Activated CD4-positive, alpha-beta memory T cell treated with anti-CD3 and anti-CD28 coated beads, Interleukin-2, amount 10 ng/mL, durations not matched to agents 7 days and 5 days (primary cell): ENCODE measurements at regions of chr5 and their contacts with region 1.

Region 1: DNA sequence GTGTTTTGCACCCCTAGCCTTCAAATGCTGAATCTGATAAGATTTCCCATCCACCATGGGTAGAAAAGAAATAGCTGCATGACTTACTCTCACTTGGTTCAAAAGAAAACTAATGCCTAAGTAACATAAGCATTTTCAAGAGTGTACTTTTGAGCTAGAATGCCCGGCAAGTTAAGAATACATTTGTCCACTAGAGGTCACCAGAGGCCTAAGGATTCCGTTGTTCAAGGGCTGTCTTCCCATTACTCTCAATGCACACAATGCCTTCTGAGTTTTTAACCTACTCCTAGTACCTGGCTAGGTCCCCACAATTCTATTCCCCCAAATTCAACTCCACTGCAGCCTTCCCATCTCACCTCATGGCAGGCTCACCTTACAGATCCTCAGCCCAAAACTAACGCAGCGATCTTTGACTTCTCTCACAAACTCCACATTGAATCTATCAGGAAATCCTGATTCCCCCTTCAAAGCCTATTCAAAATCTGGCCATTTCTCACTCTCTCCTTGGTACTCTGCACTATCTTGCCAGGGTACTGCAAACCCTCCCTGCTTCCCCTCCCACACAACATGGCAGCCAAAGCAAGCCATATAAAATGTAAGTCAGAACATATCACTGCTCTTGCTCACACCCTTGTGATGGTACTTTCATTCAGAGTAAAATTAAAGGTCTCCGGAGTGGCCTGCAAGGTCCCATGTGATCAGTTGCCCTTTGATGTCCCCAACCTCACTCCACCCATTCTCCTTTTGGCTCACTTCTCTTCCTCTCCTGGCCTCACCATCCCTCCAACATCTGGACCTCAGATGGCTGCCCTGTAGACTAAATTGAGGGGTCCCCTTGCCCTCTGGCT is 13.4 kb downstream of the OXCT1 start:
- DNase-seq: peak; percentile 54
- H3K4me3 Mint-ChIP-seq: no peak overlapping the region
- H3K27ac Mint-ChIP-seq: no peak overlapping the region
- H3K4me1 Mint-ChIP-seq: peaks cover 18% of the 10 kb centered on the region
- H3K27me3 Mint-ChIP-seq: no peaks in the 10 kb centered on the region

Region 2: GRCh38 chr5:41707853-41708603 is 148.8 kb before region 1 on chr5:
- CTCF ChIA-PET with region 1: no interaction called
- POLR2A ChIA-PET with region 1: no interaction called
- DNase-seq: no peak
- H3K4me3 Mint-ChIP-seq: no peak overlapping the region
- H3K27ac Mint-ChIP-seq: no peak overlapping the region
- H3K4me1 Mint-ChIP-seq: no peaks in the 10 kb centered on the region
- H3K27me3 Mint-ChIP-seq: peaks cover 9% of the 10 kb centered on the region

Region 3: GRCh38 chr5:41835645-41836044 is 21.2 kb before region 1 on chr5:
- CTCF ChIA-PET with region 1: interaction called, 11 read pairs
- POLR2A ChIA-PET with region 1: no interaction called
- DNase-seq: no peak
- H3K4me3 Mint-ChIP-seq: no peak overlapping the region
- H3K27ac Mint-ChIP-seq: no peak overlapping the region
- H3K4me1 Mint-ChIP-seq: peaks cover 27% of the 10 kb centered on the region
- H3K27me3 Mint-ChIP-seq: no peaks in the 10 kb centered on the region

Region 4: GRCh38 chr5:41843456-41844370 is 13.2 kb before region 1 on chr5:
- CTCF ChIA-PET with region 1: interaction called, 11 read pairs
- POLR2A ChIA-PET with region 1: interaction called, 3 read pairs
- DNase-seq: no peak
- H3K4me3 Mint-ChIP-seq: no peak overlapping the region
- H3K27ac Mint-ChIP-seq: no peak overlapping the region
- H3K4me1 Mint-ChIP-seq: peaks cover 3% of the 10 kb centered on the region
- H3K27me3 Mint-ChIP-seq: no peaks in the 10 kb centered on the region

Region 5: GRCh38 chr5:41869739-41870626 is 13.1 kb after region 1 on chr5 and contains the start of gene OXCT1:
- CTCF ChIA-PET with region 1: interaction called, 20 read pairs
- POLR2A ChIA-PET with region 1: interaction called, 7 read pairs
- DNase-seq: peak; percentile 95
- H3K4me3 Mint-ChIP-seq: peak within 1 kb of the TSS; percentile 90
- H3K27ac Mint-ChIP-seq: peak within 1 kb of the TSS; percentile 86
- H3K4me1 Mint-ChIP-seq: peaks cover 56% of the 10 kb centered on the region
- H3K27me3 Mint-ChIP-seq: no peaks in the 10 kb centered on the region
- total RNA-seq, gene OXCT1: 63.8 to 64.2 TPM

Region 6: DNA sequence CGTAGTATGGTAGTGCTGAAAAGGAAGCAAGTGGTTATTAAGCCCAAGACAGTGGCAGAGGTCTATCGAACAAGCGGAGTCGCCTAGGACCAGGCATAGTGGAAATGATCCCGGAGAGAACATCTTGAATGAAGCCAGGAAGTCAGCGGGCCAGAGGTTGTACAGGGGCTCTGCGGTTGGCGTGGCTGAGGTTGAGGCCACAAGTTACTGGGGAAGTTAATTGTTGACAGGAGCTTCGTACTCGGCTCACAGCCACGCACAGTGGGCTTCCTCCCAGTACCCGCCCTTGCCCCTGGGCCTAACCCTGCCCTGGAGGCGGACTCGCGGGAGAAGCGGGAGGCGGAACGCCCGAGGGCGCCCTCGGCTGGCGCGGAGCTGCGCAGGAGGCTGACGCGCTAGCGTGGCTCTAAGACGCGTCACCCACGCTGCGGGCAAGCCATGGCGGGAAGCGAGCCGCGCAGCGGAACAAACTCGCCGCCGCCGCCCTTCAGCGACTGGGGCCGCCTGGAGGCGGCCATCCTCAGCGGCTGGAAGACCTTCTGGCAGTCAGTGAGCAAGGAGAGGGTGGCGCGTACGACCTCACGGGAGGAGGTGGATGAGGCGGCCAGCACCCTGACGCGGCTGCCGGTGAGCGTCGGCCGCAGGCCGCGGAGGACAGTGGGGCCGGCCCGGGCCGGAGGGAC is 68.1 kb after region 1 on chr5 and contains the start of gene FBXO4:
- CTCF ChIA-PET with region 1: interaction called, 11 read pairs
- POLR2A ChIA-PET with region 1: interaction called, 11 read pairs
- DNase-seq: peak; percentile 90
- H3K4me3 Mint-ChIP-seq: peak within 1 kb of the TSS; percentile 87
- H3K27ac Mint-ChIP-seq: peak within 1 kb of the TSS; percentile 92
- H3K4me1 Mint-ChIP-seq: peaks cover 19% of the 10 kb centered on the region
- H3K27me3 Mint-ChIP-seq: no peaks in the 10 kb centered on the region
- total RNA-seq, gene FBXO4: 13.3 to 13.6 TPM

Region 7: GRCh38 chr5:42057254-42057690 is 200.4 kb after region 1 on chr5:
- CTCF ChIA-PET with region 1: interaction called, 153 read pairs
- POLR2A ChIA-PET with region 1: interaction called, 3 read pairs
- DNase-seq: peak; percentile 53
- H3K4me3 Mint-ChIP-seq: no peak overlapping the region
- H3K27ac Mint-ChIP-seq: no peak overlapping the region
- H3K4me1 Mint-ChIP-seq: no peaks in the 10 kb centered on the region
- H3K27me3 Mint-ChIP-seq: peaks cover 9% of the 10 kb centered on the region